MCF 10A (cell line): ENCODE measurements at regions of chr9 and their contacts with region 1.

Region 1: DNA sequence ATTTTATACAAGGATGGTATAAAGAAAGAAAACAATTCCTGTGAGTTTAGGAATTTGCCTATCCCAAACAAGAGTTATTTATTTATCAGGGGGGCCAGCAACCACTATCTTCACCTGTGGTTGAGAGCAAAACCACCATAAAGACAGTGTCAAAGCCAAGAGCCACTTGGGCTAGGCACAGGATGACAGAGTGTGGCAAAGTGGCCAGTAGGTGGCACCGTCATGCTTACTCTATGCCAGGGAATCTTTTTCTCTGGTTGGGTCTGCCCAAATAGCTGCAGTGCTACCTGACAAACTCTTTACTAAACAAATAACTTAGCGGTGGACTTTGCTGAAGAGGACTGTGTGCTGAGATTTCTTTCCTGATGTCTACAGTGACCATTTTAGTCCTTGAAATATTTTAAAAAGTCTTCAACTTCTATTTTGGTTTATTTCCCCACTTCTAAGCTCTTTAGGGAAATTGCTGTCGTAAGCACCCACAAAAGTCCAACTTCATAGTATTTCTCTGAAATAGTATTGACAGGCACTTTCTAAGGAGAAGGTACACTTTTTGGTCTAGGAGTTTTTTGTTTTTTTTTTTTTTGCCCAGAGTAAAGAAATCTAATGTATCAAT is 285.0 kb downstream of the RFX3 start:
- DNase-seq: peak; percentile 70
- H3K4me3 Mint-ChIP-seq: no peak overlapping the region
- H3K27ac Mint-ChIP-seq: no peak overlapping the region
- H3K4me1 Mint-ChIP-seq: peaks cover 9% of the 10 kb centered on the region
- H3K27me3 Mint-ChIP-seq: no peaks in the 10 kb centered on the region
- CTCF ChIP-seq: peak; percentile 67

Region 2: GRCh38 chr9:2745560-2746380 is 495.0 kb before region 1 on chr9:
- CTCF ChIA-PET with region 1: no interaction called
- POLR2A ChIA-PET with region 1: no interaction called
- intact Hi-C with region 1: no loop called
- DNase-seq: no peak
- H3K4me3 Mint-ChIP-seq: no peak overlapping the region
- H3K27ac Mint-ChIP-seq: no peak overlapping the region
- H3K4me1 Mint-ChIP-seq: no peaks in the 10 kb centered on the region
- H3K27me3 Mint-ChIP-seq: no peaks in the 10 kb centered on the region
- CTCF ChIP-seq: no peak

Region 3: GRCh38 chr9:3261484-3261883 is 20.7 kb after region 1 on chr9:
- CTCF ChIA-PET with region 1: interaction called, 14 read pairs
- POLR2A ChIA-PET with region 1: no interaction called
- intact Hi-C with region 1: no loop called
- DNase-seq: no peak
- H3K4me3 Mint-ChIP-seq: no peak overlapping the region
- H3K27ac Mint-ChIP-seq: no peak overlapping the region
- H3K4me1 Mint-ChIP-seq: no peaks in the 10 kb centered on the region
- H3K27me3 Mint-ChIP-seq: no peaks in the 10 kb centered on the region
- CTCF ChIP-seq: no peak

Region 4: DNA sequence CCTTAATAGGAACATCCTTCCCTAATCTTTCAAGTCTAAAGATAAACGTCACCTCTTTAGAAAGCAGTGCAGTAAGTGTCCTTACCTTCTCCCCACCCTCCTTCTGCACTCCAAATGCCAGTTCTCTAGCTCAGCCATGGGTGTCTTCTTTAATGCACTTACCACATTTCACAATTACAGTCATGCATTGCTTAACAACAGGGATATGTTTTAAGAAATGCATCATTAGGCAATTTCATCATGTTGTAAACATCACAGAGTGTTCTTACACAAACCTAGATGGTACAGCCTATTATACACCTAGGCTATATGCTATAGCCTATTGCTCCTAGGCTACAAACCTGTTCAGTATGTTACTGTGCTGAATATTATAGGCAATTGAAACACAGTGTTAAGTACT is 193.8 kb after region 1 on chr9:
- CTCF ChIA-PET with region 1: interaction called, 176 read pairs
- POLR2A ChIA-PET with region 1: no interaction called
- intact Hi-C with region 1: no loop called
- DNase-seq: peak; percentile 91
- H3K4me3 Mint-ChIP-seq: peak overlapping the region; percentile 43
- H3K27ac Mint-ChIP-seq: peak overlapping the region; percentile 75
- H3K4me1 Mint-ChIP-seq: peaks cover 15% of the 10 kb centered on the region
- H3K27me3 Mint-ChIP-seq: no peaks in the 10 kb centered on the region
- CTCF ChIP-seq: no peak

Region 5: DNA sequence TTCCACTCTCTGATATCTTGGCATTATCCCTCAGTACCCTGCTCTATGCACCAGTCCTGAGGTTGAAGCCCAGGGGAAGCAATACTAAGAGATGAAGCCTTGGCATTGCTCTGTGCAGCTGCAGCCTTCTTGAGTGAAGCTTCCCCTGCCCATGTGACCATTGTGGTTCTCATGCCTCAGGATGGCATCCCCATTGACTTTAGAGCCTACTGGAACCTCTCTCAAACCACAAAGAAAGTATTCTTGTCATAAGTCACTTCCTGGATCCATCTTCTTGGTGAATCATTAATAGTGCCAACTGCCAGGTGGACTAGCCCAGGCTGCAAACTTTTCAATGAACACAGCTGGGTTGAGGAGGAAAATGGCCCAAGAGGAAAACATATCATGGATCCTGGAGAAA is 569.0 kb after region 1 on chr9:
- CTCF ChIA-PET with region 1: no interaction called
- POLR2A ChIA-PET with region 1: no interaction called
- intact Hi-C with region 1: no loop called
- DNase-seq: peak; percentile 44
- H3K4me3 Mint-ChIP-seq: no peak overlapping the region
- H3K27ac Mint-ChIP-seq: no peak overlapping the region
- H3K4me1 Mint-ChIP-seq: peaks cover 5% of the 10 kb centered on the region
- H3K27me3 Mint-ChIP-seq: no peaks in the 10 kb centered on the region
- CTCF ChIP-seq: no peak

Region 6: DNA sequence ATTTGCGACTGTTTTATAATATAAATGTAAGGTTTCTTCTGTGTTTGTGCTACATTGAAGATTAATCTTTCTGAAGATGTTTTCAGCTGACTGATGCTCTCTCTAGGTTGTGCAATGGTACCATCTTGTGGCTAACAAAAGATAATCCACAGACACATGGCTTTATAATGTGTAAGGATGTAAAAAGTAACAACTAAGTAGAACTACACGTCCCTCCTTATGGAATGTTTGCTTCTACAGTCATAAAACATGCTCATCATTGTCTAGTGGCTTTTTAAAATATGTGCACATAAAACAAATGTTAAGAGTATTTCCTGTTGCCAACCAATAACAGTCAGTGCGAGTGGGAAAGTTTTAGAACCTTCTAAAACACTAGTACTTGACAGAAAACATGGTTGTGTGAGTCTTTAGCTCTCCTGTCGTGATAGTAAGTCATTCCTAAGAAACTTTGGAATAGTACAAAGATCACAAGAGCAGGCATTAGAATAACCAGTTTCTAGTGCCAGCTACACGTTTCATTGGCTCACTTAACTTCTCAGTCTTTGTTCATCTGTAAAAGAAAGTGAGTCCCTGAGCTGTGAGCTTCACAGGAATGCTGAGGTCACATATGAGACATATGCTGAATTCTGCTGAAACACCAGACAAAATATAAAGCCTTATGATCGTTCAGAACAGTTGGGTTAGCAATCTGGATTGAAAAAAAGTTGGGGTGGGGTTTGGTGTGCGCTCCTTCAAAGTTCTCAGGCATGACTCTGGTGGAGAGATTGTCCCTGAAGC is 1134.8 kb after region 1 on chr9:
- CTCF ChIA-PET with region 1: no interaction called
- POLR2A ChIA-PET with region 1: no interaction called
- intact Hi-C with region 1: loop called (anchors 10 kb)
- DNase-seq: peak; percentile 50
- H3K4me3 Mint-ChIP-seq: no peak overlapping the region
- H3K27ac Mint-ChIP-seq: no peak overlapping the region
- H3K4me1 Mint-ChIP-seq: peaks cover 11% of the 10 kb centered on the region
- H3K27me3 Mint-ChIP-seq: peaks cover 24% of the 10 kb centered on the region
- CTCF ChIP-seq: peak; percentile 54